ENCODE measurements at regions of chrX and their contacts with region 1.

Region 1: GRCh38 chrX:68571610-68572311 is 72.9 kb downstream of the YIPF6 start:
- DNase-seq: no peak
- H3K4me3 Mint-ChIP-seq: no peak overlapping the region
- H3K27ac Mint-ChIP-seq: no peak overlapping the region
- H3K4me1 Mint-ChIP-seq: peaks cover 9% of the 10 kb centered on the region
- H3K27me3 Mint-ChIP-seq: no peaks in the 10 kb centered on the region

Region 2: DNA sequence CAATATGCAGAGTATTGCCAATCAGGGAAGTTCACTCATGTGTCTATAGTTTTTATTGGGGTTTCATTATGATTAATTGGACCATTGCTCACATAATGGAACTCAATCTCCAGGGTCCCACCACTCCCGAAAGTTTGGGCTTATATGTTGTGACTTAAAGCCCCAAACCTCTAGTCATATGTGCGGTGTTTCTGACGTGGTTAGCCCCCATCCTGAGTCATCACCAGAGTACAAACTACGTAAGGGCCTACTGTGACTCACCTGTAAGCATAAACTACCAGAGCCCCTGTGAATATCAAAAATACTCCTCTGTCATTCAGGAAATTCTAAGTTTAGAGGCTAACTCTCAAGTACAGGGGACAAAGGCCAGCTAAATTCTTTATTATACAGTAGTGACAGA is 67.5 kb before region 1 on chrX:
- intact Hi-C with region 1: loop called (anchors 5 kb)
- DNase-seq: peak; percentile 8
- H3K4me3 Mint-ChIP-seq: no peak overlapping the region
- H3K27ac Mint-ChIP-seq: peak overlapping the region; percentile 67
- H3K4me1 Mint-ChIP-seq: peaks cover 40% of the 10 kb centered on the region
- H3K27me3 Mint-ChIP-seq: no peaks in the 10 kb centered on the region

Region 3: GRCh38 chrX:68686097-68686977 is 114.6 kb after region 1 on chrX:
- intact Hi-C with region 1: loop called (anchors 5 kb)
- DNase-seq: peak; percentile 11
- H3K4me3 Mint-ChIP-seq: peak overlapping the region; percentile 84
- H3K27ac Mint-ChIP-seq: peak overlapping the region; percentile 81
- H3K4me1 Mint-ChIP-seq: peaks cover 38% of the 10 kb centered on the region
- H3K27me3 Mint-ChIP-seq: no peaks in the 10 kb centered on the region

Measured in activated T-helper 1 cell treated with anti-CD3 and anti-CD28 coated beads, Interleukin-12 subunit alpha, Interleukin-12 subunit beta, Interleukin-2, Interleukin-4 antibody, amounts not matched to agents 30 ng/mL and 10 ng/mL and 1 ng/mL, durations not matched to agents 14 hours and 24 hours and 36 hours (primary cell).